Activated T-helper 1 cell treated with anti-CD3 and anti-CD28 coated beads, Interleukin-12 subunit alpha, Interleukin-12 subunit beta, Interleukin-2, Interleukin-4 antibody, amounts not matched to agents 30 ng/mL and 10 ng/mL and 1 ng/mL, durations not matched to agents 14 hours and 24 hours and 36 hours (primary cell): ENCODE measurements at regions of chr3 and their contacts with region 1.

Region 1: DNA sequence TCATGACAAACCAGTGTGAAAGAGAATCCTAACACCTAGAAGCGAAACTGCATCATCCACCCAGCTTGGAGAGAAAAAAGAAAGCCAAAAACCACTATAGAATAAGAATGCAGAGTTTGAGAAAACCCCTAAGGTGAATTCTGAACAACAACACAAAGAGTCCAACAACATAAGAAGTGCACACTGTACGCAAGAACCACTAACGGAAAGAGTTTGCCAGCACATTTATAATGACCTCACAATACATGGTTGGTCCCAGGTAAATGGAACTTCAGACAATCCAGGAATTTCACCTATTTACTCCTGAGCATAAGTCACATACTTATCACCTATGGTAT is 128.3 kb upstream of the BHLHE40 start:
- DNase-seq: peak; percentile 56
- H3K4me3 Mint-ChIP-seq: peak overlapping the region; percentile 67
- H3K27ac Mint-ChIP-seq: peak overlapping the region; percentile 99
- H3K4me1 Mint-ChIP-seq: peaks cover 85% of the 10 kb centered on the region
- H3K27me3 Mint-ChIP-seq: no peaks in the 10 kb centered on the region

Region 2: GRCh38 chr3:4449043-4449805 is 401.7 kb before region 1 on chr3:
- intact Hi-C with region 1: no loop called
- DNase-seq: no peak
- H3K4me3 Mint-ChIP-seq: no peak overlapping the region
- H3K27ac Mint-ChIP-seq: no peak overlapping the region
- H3K4me1 Mint-ChIP-seq: no peaks in the 10 kb centered on the region
- H3K27me3 Mint-ChIP-seq: no peaks in the 10 kb centered on the region

Region 3: DNA sequence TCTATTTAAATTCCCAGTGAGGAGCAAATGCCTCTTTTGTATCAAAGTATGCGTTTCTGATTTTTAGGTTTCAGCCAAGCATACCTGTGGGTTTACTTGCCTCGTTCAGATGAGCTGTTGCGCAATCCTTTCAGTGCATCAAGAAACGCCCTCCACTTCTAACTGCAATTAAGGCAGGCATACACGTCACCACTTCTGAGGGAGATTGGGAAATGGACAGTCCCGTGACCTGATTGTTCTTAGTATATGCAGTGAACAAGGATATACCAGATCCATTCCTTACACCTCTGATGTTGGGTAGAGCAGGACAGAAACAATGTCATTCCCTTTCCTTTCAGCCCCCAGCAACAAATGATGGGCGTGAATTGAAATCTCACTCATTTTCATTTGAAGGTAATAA is 138.8 kb before region 1 on chr3:
- intact Hi-C with region 1: loop called (anchors 2 kb)
- DNase-seq: no peak
- H3K4me3 Mint-ChIP-seq: no peak overlapping the region
- H3K27ac Mint-ChIP-seq: peak overlapping the region; percentile 32
- H3K4me1 Mint-ChIP-seq: peaks cover 61% of the 10 kb centered on the region
- H3K27me3 Mint-ChIP-seq: no peaks in the 10 kb centered on the region

Region 4: GRCh38 chr3:4741404-4742307 is 109.2 kb before region 1 on chr3:
- intact Hi-C with region 1: loop called (anchors 1 kb)
- DNase-seq: no peak
- H3K4me3 Mint-ChIP-seq: peak overlapping the region; percentile 74
- H3K27ac Mint-ChIP-seq: peak overlapping the region; percentile 89
- H3K4me1 Mint-ChIP-seq: peaks cover 79% of the 10 kb centered on the region
- H3K27me3 Mint-ChIP-seq: no peaks in the 10 kb centered on the region

Region 5: GRCh38 chr3:4804161-4805058 is 46.5 kb before region 1 on chr3:
- intact Hi-C with region 1: loop called (anchors 1 kb)
- DNase-seq: no peak
- H3K4me3 Mint-ChIP-seq: no peak overlapping the region
- H3K27ac Mint-ChIP-seq: peak overlapping the region; percentile 76
- H3K4me1 Mint-ChIP-seq: peaks cover 59% of the 10 kb centered on the region
- H3K27me3 Mint-ChIP-seq: no peaks in the 10 kb centered on the region

Region 6: GRCh38 chr3:4906107-4906621 is 55.3 kb after region 1 on chr3:
- intact Hi-C with region 1: loop called (anchors 1 kb)
- DNase-seq: no peak
- H3K4me3 Mint-ChIP-seq: peak overlapping the region; percentile 64
- H3K27ac Mint-ChIP-seq: peak overlapping the region; percentile 94
- H3K4me1 Mint-ChIP-seq: peaks cover 90% of the 10 kb centered on the region
- H3K27me3 Mint-ChIP-seq: no peaks in the 10 kb centered on the region

Region 7: DNA sequence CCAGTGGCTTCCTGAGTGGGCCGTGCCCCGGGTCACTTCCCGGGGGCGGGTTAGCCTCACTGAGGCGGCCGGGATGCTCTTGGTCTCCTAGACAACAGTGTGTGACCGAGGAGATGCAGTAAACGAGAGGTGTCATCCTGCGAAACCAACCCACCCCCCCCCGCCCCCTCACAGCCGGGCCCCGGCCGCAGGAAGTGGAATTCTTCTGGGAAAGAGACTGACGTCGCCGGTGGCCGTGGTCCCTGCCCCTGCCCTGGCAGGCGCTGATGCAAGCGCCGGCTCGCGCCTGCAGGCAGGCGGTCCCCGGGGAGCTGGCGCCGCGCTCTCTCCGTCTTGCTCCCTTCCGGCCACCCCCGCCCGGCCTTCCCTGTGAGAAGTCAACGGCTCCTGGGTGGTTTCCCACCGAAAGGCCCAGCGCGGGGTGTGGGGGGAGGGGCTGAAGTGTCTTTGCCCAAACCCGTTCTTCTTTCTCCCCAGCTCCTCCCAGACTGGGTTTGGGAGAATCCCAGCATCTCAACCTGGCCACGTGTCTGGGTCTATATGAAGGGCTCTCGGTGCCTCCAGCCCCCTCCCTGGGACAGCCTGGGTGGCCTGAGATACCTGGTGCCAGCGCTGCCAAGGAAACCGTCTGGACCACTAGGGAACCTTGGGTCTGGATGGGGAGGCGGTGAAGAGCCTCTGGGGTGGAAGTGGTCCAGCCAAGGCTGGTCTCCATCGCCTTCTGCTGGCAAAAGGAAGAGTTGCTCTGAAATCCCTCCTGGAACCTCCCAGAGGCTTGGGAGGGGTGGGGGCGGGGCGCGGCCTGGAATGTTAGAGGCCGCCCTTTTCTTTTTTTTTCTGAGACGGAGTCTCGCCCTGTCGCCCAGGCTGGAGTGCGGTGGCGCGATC is 175.7 kb after region 1 on chr3:
- intact Hi-C with region 1: loop called (anchors 1 kb)
- DNase-seq: peak; percentile 59
- H3K4me3 Mint-ChIP-seq: peak overlapping the region; percentile 81
- H3K27ac Mint-ChIP-seq: peak overlapping the region; percentile 95
- H3K4me1 Mint-ChIP-seq: peaks cover 70% of the 10 kb centered on the region
- H3K27me3 Mint-ChIP-seq: no peaks in the 10 kb centered on the region

Region 8: GRCh38 chr3:5122030-5122740 is 271.3 kb after region 1 on chr3 and contains the start of gene ARL8B:
- intact Hi-C with region 1: loop called (anchors 5 kb)
- DNase-seq: peak; percentile 90
- H3K4me3 Mint-ChIP-seq: peak within 1 kb of the TSS; percentile 88
- H3K27ac Mint-ChIP-seq: peak within 1 kb of the TSS; percentile 87
- H3K4me1 Mint-ChIP-seq: peaks cover 40% of the 10 kb centered on the region
- H3K27me3 Mint-ChIP-seq: no peaks in the 10 kb centered on the region
- total RNA-seq, gene ARL8B: 43.4 and 51.0 TPM in 2 replicates